AG04449 (cell line): ENCODE measurements at regions of chr3 and their contacts with region 1.

Region 1: GRCh38 chr3:119676771-119677640 is at the start of gene COX17:
- DNase-seq: peak; percentile 71
- H3K4me3 ChIP-seq: peak within 1 kb of the TSS; percentile 74
- CTCF ChIP-seq: no peak

Region 2: GRCh38 chr3:119145500-119146191 is 531.4 kb before region 1 on chr3 and contains the start of gene TEX55:
- CTCF ChIA-PET with region 1: interaction called, 13 read pairs
- POLR2A ChIA-PET with region 1: no interaction called
- DNase-seq: no peak
- H3K4me3 ChIP-seq: no peak within 1 kb of the TSS
- CTCF ChIP-seq: peak; percentile 75

Region 3: DNA sequence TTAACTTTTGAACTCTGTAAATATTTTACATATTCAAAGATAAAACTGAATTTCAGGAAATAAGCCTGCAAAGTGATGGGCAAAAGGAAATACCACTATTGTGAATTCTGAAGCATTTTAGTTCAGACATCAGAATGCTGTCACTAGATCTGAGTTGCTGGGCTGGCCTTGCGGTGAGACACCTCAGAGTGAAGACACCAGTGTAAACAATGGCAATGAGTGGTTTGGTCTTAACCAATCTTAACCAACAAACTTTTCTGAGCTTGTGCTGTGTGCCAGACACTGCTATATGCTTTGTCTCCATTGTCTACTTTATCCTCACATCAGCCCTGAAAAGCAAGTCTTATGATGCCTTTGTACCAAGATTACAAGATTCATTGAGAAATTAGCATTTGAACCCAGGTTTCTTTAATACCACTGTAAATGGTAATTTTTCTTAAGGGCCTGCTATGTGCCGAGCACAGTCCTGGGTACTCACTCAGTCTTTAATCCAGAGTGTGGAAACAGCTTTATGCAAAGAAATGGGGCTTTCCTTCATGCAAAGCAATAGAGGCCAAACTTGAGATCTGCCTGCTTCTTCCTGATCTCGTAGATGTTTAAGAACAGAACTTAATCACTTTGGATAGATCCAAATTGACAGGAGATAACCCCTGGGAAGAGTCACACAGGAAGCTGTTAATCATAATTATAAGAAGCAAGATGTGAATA is 268.6 kb before region 1 on chr3:
- CTCF ChIA-PET with region 1: interaction called, 12 read pairs
- POLR2A ChIA-PET with region 1: no interaction called
- DNase-seq: no peak
- H3K4me3 ChIP-seq: no peak overlapping the region
- CTCF ChIP-seq: no peak

Region 4: DNA sequence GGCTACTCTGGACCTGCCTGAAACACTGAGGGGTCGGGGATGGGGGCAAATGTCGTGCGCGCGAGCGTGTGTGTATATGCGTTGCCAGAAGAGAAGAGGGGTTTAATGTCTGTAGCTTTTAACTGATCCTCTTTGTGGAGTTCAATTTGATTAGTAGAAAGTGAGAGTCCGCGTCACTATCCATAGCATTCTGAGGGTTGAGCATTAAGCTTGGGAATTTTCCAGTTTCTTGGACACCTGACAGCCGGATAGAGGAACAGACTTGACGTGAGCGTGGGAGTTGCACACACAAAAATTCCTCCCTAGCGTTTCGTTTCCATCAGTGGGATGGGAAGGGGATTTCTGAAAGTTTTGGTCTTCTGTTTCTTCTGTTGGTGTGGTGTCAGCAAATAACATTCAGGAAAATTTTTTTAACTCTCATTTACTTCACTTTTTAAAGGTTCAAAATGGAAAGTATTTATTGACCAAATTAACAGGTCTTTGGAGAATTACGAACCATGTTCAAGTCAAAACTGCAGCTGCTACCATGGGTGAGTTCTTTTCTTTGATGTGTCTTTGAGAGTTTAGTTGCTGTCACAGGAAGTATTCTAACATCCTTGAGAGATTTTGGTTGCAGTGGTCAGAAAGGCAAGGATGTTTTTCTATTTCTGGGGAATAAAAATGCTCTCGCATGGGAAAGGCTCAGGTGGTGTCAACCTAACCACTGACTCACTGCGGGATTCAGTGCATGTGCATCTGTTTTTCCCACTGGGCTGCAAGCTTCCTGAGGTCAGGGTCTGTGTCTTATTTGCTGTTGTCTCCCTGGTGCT is 207.4 kb before region 1 on chr3:
- CTCF ChIA-PET with region 1: interaction called, 38 read pairs
- POLR2A ChIA-PET with region 1: interaction called, 3 read pairs
- DNase-seq: no peak
- H3K4me3 ChIP-seq: peak overlapping the region; percentile 90
- CTCF ChIP-seq: no peak

Region 5: GRCh38 chr3:119662604-119663373 is 14.2 kb before region 1 on chr3:
- CTCF ChIA-PET with region 1: interaction called, 11 read pairs
- POLR2A ChIA-PET with region 1: interaction called, 7 read pairs
- DNase-seq: no peak
- H3K4me3 ChIP-seq: no peak overlapping the region
- CTCF ChIP-seq: peak; percentile 20